Activated T-helper 1 cell treated with anti-CD3 and anti-CD28 coated beads, Interleukin-12 subunit alpha, Interleukin-12 subunit beta, Interleukin-2, Interleukin-4 antibody, amounts not matched to agents 30 ng/mL and 10 ng/mL and 1 ng/mL, durations not matched to agents 14 hours and 24 hours and 36 hours (primary cell): ENCODE measurements at regions of chr4 and their contacts with region 1.

Region 1: GRCh38 chr4:26076000-26076587 is 162.1 kb downstream of the SMIM20 start:
- DNase-seq: peak; percentile 63
- H3K4me3 Mint-ChIP-seq: peak overlapping the region; percentile 64
- H3K27ac Mint-ChIP-seq: peak overlapping the region; percentile 92
- H3K4me1 Mint-ChIP-seq: peaks cover 86% of the 10 kb centered on the region
- H3K27me3 Mint-ChIP-seq: no peaks in the 10 kb centered on the region

Region 2: DNA sequence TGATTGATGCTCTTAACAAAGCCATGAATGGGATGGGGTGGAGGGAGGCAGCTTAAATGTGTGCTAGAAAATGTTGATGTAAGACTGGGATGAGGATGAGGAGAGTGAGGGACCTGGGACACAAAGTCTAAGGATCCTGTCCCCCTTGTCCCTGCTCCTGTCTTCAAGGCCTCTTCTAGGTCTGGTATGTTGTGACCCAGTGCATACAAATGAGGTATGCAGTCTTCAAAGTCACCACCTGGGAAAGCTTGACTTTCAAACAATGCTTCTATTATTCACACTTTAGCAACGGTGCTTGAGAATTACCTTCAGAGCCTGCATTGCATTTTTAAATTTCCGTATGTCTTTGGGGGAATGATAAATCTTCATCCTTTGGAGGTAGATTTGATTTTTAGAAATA is 508.8 kb before region 1 on chr4:
- intact Hi-C with region 1: no loop called
- DNase-seq: no peak
- H3K4me3 Mint-ChIP-seq: no peak overlapping the region
- H3K27ac Mint-ChIP-seq: no peak overlapping the region
- H3K4me1 Mint-ChIP-seq: no peaks in the 10 kb centered on the region
- H3K27me3 Mint-ChIP-seq: peaks cover 2% of the 10 kb centered on the region

Region 3: GRCh38 chr4:25993395-25994185 is 82.5 kb before region 1 on chr4:
- intact Hi-C with region 1: loop called (anchors 1 kb)
- DNase-seq: no peak
- H3K4me3 Mint-ChIP-seq: no peak overlapping the region
- H3K27ac Mint-ChIP-seq: no peak overlapping the region
- H3K4me1 Mint-ChIP-seq: peaks cover 13% of the 10 kb centered on the region
- H3K27me3 Mint-ChIP-seq: peaks cover 2% of the 10 kb centered on the region

Region 4: GRCh38 chr4:26034849-26035248 is 41.2 kb before region 1 on chr4:
- intact Hi-C with region 1: loop called (anchors 1 kb)
- DNase-seq: no peak
- H3K4me3 Mint-ChIP-seq: no peak overlapping the region
- H3K27ac Mint-ChIP-seq: peak overlapping the region; percentile 35
- H3K4me1 Mint-ChIP-seq: peaks cover 44% of the 10 kb centered on the region
- H3K27me3 Mint-ChIP-seq: peaks cover 3% of the 10 kb centered on the region

Region 5: DNA sequence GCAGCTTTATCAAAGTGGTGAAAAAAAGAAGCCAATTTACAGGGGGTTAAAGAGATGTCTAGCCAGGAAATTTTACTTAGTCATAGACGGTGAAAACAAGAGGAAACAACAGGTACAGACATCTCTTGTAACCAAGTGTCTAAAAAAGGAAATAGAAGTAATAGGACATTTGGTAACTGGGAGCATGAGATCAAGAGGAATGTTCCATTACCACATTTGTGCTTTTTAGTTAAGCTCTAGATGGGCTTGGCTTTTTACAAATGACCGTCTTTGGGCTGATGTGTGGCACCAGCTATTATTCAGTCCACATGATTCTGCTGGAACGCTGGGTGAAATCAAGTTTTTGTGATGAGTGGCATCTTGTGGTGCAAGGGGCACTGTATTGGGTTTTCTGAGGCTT is 17.5 kb after region 1 on chr4:
- intact Hi-C with region 1: loop called (anchors 1 kb)
- DNase-seq: no peak
- H3K4me3 Mint-ChIP-seq: no peak overlapping the region
- H3K27ac Mint-ChIP-seq: peak overlapping the region; percentile 94
- H3K4me1 Mint-ChIP-seq: peaks cover 62% of the 10 kb centered on the region
- H3K27me3 Mint-ChIP-seq: peaks cover 4% of the 10 kb centered on the region

Region 6: GRCh38 chr4:26105815-26106699 is 30.0 kb after region 1 on chr4:
- intact Hi-C with region 1: no loop called
- DNase-seq: no peak
- H3K4me3 Mint-ChIP-seq: no peak overlapping the region
- H3K27ac Mint-ChIP-seq: no peak overlapping the region
- H3K4me1 Mint-ChIP-seq: peaks cover 39% of the 10 kb centered on the region
- H3K27me3 Mint-ChIP-seq: no peaks in the 10 kb centered on the region

Region 7: DNA sequence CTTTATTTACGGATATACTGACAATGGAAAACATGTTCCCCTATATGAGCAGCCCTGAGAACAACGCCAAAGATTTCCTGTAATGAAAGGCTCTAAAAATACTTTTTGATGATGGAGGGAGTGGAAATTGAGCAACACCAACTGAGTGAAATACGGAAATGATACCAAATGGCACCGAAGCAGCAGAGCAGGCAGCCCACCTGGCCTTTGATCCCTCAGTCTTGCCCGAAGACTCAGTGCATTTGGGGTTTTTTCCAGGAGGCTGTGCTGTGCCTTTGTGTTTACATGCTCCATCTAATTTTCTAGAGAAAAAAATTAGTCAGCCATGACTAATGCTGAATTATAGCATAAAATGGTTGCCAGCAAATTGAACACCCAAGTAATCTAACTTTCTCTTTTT is 74.9 kb after region 1 on chr4:
- intact Hi-C with region 1: loop called (anchors 1 kb)
- DNase-seq: no peak
- H3K4me3 Mint-ChIP-seq: peak overlapping the region; percentile 1
- H3K27ac Mint-ChIP-seq: peak overlapping the region; percentile 82
- H3K4me1 Mint-ChIP-seq: peaks cover 62% of the 10 kb centered on the region
- H3K27me3 Mint-ChIP-seq: no peaks in the 10 kb centered on the region

Region 8: GRCh38 chr4:26319467-26319948 is 243.4 kb after region 1 on chr4:
- intact Hi-C with region 1: loop called (anchors 1 kb)
- DNase-seq: peak; percentile 98
- H3K4me3 Mint-ChIP-seq: peak overlapping the region; percentile 94
- H3K27ac Mint-ChIP-seq: peak overlapping the region; percentile 100
- H3K4me1 Mint-ChIP-seq: peaks cover 33% of the 10 kb centered on the region
- H3K27me3 Mint-ChIP-seq: peaks cover 2% of the 10 kb centered on the region

Region 9: GRCh38 chr4:26885912-26886274 is 809.8 kb after region 1 on chr4:
- intact Hi-C with region 1: loop called (anchors 1 kb)
- DNase-seq: peak; percentile 43
- H3K4me3 Mint-ChIP-seq: peak overlapping the region; percentile 69
- H3K27ac Mint-ChIP-seq: peak overlapping the region; percentile 91
- H3K4me1 Mint-ChIP-seq: peaks cover 77% of the 10 kb centered on the region
- H3K27me3 Mint-ChIP-seq: no peaks in the 10 kb centered on the region